Activated CD8-positive, alpha-beta T cell treated with anti-CD3 and anti-CD28 coated beads for 36 hours (primary cell): ENCODE measurements at regions of chr10 and their contacts with region 1.

Region 1: DNA sequence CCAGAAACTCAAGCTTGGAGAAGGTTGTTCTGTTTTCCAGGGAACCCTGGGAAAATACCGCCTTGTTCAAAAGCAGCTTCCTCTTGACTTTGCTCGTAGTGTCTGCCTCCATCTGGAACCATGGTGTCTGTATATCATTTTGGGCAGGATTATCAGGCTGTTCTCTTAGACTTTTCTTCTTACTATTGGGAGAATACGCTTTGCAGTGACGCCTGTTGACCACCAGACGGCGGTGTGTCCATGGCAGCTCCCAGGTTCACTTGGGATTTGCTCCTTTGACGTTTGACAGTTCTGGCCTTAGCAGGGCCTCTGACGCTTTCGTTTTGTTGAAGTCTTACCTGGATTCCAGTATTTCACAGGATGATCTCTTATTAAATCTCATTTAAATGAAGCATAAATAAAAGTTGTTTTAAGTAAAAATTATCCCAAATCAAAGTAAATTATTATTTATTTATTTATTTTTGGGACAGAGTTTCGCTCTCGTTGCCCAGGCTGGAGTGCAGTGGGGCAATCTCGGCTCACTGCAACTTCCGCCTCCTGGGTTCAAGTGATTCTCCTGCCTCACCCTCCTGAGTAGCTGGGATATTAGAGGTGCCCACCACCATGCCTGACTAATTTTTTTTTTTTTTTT is 41.8 kb upstream of the GJD4 start:
- DNase-seq: peak; percentile 57
- ATAC-seq: peak; percentile 82
- H3K4me3 Mint-ChIP-seq: no peak overlapping the region
- H3K27ac Mint-ChIP-seq: peak overlapping the region; percentile 59
- H3K4me1 Mint-ChIP-seq: peaks cover 8% of the 10 kb centered on the region
- H3K27me3 Mint-ChIP-seq: no peaks in the 10 kb centered on the region
- CTCF ChIP-seq: peak; percentile 98

Region 2: DNA sequence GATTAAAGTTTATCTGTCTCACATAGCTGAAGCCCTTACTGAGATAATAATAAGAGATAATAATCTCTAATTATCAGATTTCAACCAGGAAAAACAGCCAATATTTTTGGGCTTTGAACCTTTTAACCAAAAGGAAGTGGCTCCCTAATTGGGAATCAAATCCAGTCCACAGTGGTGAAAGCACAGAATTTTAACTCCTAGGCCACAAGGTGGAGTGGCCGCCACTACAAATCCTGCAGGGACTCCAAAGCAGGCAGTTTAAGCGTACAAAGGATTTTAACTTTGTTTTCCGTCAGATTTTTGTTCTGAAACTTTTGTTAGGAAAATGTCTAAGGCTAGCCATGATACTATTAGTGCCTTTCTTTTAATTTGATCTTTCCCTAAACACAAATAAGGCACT is 326.6 kb before region 1 on chr10:
- CTCF ChIA-PET with region 1: interaction called, 10 read pairs
- POLR2A ChIA-PET with region 1: no interaction called
- intact Hi-C with region 1: loop called (anchors 10 kb)
- DNase-seq: no peak
- ATAC-seq: no peak
- H3K4me3 Mint-ChIP-seq: no peak overlapping the region
- H3K27ac Mint-ChIP-seq: no peak overlapping the region
- H3K4me1 Mint-ChIP-seq: no peaks in the 10 kb centered on the region
- H3K27me3 Mint-ChIP-seq: no peaks in the 10 kb centered on the region
- CTCF ChIP-seq: no peak

Region 3: DNA sequence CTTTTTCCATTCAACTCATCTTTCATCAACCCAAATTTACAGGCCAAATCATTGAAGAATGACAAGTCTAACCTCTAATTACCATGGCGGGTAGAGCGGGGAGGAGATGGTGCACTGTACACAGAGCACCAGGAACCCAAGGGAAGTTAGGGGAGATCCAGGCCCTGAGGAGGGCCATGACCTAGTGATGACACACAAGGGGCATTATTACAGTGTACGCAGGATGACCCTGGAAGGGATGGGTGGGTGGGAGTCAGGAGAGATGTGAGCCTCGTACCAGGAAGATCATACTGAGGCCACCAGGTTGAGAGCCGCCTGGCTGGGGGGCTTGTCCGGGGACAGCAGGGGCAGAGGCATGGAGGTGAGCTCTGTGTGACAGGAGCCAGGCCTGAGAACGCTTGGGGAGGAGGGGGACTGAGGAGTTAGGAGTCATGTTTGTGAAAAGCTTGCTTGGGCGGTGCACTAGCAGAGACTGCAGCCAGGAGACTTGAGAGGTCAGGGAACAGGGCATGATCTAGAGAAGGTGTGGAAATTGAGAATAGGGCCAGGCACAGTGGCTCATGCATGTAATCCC is 316.5 kb before region 1 on chr10:
- CTCF ChIA-PET with region 1: no interaction called
- POLR2A ChIA-PET with region 1: no interaction called
- intact Hi-C with region 1: loop called (anchors 10 kb)
- DNase-seq: no peak
- ATAC-seq: no peak
- H3K4me3 Mint-ChIP-seq: no peak overlapping the region
- H3K27ac Mint-ChIP-seq: no peak overlapping the region
- H3K4me1 Mint-ChIP-seq: no peaks in the 10 kb centered on the region
- H3K27me3 Mint-ChIP-seq: peaks cover 4% of the 10 kb centered on the region
- CTCF ChIP-seq: no peak

Region 4: GRCh38 chr10:35546824-35547273 is 16.5 kb before region 1 on chr10:
- CTCF ChIA-PET with region 1: interaction called, 26 read pairs
- POLR2A ChIA-PET with region 1: no interaction called
- intact Hi-C with region 1: no loop called
- DNase-seq: no peak
- ATAC-seq: no peak
- H3K4me3 Mint-ChIP-seq: no peak overlapping the region
- H3K27ac Mint-ChIP-seq: no peak overlapping the region
- H3K4me1 Mint-ChIP-seq: peaks cover 5% of the 10 kb centered on the region
- H3K27me3 Mint-ChIP-seq: no peaks in the 10 kb centered on the region
- CTCF ChIP-seq: no peak